ENCODE measurements at regions of chr10 and their contacts with region 1.

Region 1: GRCh38 chr10:93074147-93074596 is 479 bp downstream of the CYP26A1 start:
- DNase-seq: peak; percentile 68
- H3K4me3 ChIP-seq: peak overlapping the region; percentile 44
- H3K27ac ChIP-seq: no peak overlapping the region
- H3K4me1 ChIP-seq: peaks cover 25% of the 10 kb centered on the region
- H3K27me3 ChIP-seq: peaks cover 90% of the 10 kb centered on the region
- CTCF ChIP-seq: peak; percentile 48

Region 2: GRCh38 chr10:92891885-92892704 is 182.1 kb before region 1 on chr10:
- CTCF ChIA-PET with region 1: no interaction called
- POLR2A ChIA-PET with region 1: no interaction called
- intact Hi-C with region 1: loop called (anchors 5 kb)
- DNase-seq: no peak
- H3K4me3 ChIP-seq: no peak overlapping the region
- H3K27ac ChIP-seq: no peak overlapping the region
- H3K4me1 ChIP-seq: peaks cover 3% of the 10 kb centered on the region
- H3K27me3 ChIP-seq: no peaks in the 10 kb centered on the region
- CTCF ChIP-seq: no peak

Region 3: DNA sequence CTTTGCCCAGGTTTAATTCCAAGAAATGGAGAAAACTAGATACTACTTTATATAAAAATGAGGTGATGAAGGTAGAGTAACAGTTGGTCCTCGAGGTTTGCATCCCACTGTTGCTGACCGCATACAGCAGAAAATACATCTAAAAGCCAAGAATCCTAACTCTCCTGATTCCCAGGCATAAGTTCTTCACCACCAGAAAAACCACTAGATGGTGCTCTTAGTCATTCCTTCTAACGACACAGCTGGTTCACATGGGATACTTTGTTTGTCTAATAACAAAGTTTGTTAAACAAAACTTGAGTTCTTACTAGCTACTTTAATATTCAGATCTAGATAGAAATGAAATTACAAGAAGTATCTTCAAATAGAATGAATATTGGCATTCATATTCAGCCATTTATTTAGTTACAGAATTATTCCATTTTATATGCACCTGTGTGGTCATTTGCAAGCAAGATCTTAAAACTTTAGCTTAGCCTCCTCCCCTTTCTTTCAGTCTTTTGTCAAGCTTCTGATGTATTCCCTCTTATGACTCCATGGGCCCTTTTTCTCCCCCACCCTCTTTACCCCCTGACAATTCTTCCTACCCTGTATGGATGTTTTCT is 67.6 kb before region 1 on chr10:
- CTCF ChIA-PET with region 1: interaction called, 4 read pairs
- POLR2A ChIA-PET with region 1: interaction called, 10 read pairs
- intact Hi-C with region 1: no loop called
- DNase-seq: peak; percentile 62
- H3K4me3 ChIP-seq: no peak overlapping the region
- H3K27ac ChIP-seq: no peak overlapping the region
- H3K4me1 ChIP-seq: no peaks in the 10 kb centered on the region
- H3K27me3 ChIP-seq: no peaks in the 10 kb centered on the region
- CTCF ChIP-seq: peak; percentile 72

Region 4: GRCh38 chr10:93496322-93497041 is 422.3 kb after region 1 on chr10 and contains the start of gene CEP55:
- CTCF ChIA-PET with region 1: no interaction called
- POLR2A ChIA-PET with region 1: no interaction called
- intact Hi-C with region 1: no loop called
- DNase-seq: peak; percentile 97
- H3K4me3 ChIP-seq: peak within 1 kb of the TSS; percentile 76
- H3K27ac ChIP-seq: peak within 1 kb of the TSS; percentile 80
- H3K4me1 ChIP-seq: peaks cover 5% of the 10 kb centered on the region
- H3K27me3 ChIP-seq: no peaks in the 10 kb centered on the region
- CTCF ChIP-seq: no peak
- total RNA-seq, gene CEP55: 67.9 and 68.5 TPM in 2 replicates

Region 5: GRCh38 chr10:93874309-93875031 is 800.3 kb after region 1 on chr10:
- CTCF ChIA-PET with region 1: no interaction called
- POLR2A ChIA-PET with region 1: no interaction called
- intact Hi-C with region 1: no loop called
- DNase-seq: no peak
- H3K4me3 ChIP-seq: no peak overlapping the region
- H3K27ac ChIP-seq: no peak overlapping the region
- H3K4me1 ChIP-seq: no peaks in the 10 kb centered on the region
- H3K27me3 ChIP-seq: no peaks in the 10 kb centered on the region
- CTCF ChIP-seq: no peak

Measured in A673 (cell line).